ENCODE measurements at regions of chr15 and their contacts with region 1.

Region 1: GRCh38 chr15:78065284-78065872 is 12.1 kb downstream of the TBC1D2B start:
- DNase-seq: no peak
- ATAC-seq: peak; percentile 14
- H3K4me3 ChIP-seq: peak overlapping the region; percentile 69
- H3K27ac ChIP-seq: peak overlapping the region; percentile 89
- H3K4me1 ChIP-seq: peaks cover 70% of the 10 kb centered on the region
- H3K27me3 ChIP-seq: no peaks in the 10 kb centered on the region
- CTCF ChIP-seq: no peak
- EP300 ChIP-seq: no peak
- POLR2A ChIP-seq: no peak
- RAD21 ChIP-seq: no peak

Region 2: DNA sequence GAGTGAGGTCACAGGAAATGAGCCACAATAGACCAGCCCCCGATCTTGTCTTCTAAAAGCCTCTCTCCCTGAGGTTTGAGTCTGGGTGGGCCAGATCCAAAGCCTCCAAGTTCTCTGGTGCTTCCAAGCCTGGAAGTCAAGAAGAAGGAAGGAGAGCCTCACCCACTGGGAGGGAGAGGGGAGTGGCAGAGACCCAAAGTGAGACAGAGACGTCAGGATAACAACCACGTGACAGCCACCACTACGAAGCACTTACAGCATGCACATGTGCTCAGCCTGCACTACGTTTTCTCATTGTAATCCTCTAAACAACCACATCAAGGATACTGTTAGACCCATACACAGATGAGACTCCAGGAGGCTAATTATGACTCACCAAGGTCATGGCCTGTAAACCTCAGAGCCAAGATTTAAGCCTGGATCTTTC is 235.3 kb before region 1 on chr15:
- CTCF ChIA-PET with region 1: no interaction called
- POLR2A ChIA-PET with region 1: no interaction called
- RAD21 ChIA-PET with region 1: no interaction called
- SMC1A ChIA-PET with region 1: no interaction called
- in situ Hi-C with region 1: no loop called
- intact Hi-C with region 1: no loop called
- DNase-seq: no peak
- ATAC-seq: no peak
- H3K4me3 ChIP-seq: no peak overlapping the region
- H3K27ac ChIP-seq: no peak overlapping the region
- H3K4me1 ChIP-seq: no peaks in the 10 kb centered on the region
- H3K27me3 ChIP-seq: no peaks in the 10 kb centered on the region; a peak in 2 of 4 replicates
- CTCF ChIP-seq: no peak
- EP300 ChIP-seq: no peak
- POLR2A ChIP-seq: no peak
- RAD21 ChIP-seq: no peak

Region 3: DNA sequence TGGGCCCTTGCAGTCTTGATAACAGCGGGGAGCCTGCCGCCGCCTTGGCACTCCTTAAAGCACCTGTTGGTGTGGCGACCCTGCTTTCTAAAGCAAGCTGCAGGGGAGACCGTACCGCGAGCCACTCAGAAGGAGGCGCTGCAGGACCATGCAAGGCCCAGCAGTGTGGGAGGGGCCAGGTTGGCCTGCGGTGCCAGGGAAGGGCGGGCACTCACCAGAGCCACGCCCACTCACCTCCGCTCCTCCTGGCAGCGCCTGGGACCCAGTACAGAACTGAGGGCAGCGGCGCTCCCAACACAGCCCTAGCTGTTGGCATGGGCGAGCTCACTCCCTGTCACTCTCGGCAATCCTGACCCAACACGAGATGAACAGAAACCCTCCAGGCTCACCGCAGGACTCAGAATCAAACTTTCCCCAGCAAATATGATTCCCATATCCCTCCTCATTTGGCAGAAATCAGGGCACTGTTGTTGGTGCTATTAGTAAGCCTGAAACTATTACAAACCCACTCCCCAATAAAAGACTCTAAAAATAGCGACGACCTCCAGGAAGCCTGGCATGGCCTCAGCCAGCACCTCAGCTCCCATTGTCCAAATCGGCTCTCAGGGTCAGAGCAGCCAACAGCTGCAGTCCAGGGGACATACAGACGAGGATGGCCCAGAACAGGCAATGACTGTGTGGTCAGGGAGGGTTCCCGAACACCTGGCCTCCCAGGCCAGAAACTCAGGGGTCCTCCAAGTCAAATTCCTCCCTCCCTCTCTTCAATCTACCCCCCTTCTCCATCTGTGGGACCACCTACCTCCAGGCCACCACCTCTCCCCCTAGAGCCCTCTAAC is 65.1 kb before region 1 on chr15:
- CTCF ChIA-PET with region 1: interaction called, 12 read pairs
- POLR2A ChIA-PET with region 1: interaction called, 4 read pairs
- RAD21 ChIA-PET with region 1: interaction called, 15 read pairs
- SMC1A ChIA-PET with region 1: interaction called, 10 read pairs
- in situ Hi-C with region 1: no loop called
- intact Hi-C with region 1: loop called (anchors 5 kb)
- DNase-seq: no peak
- ATAC-seq: peak; percentile 87
- H3K4me3 ChIP-seq: no peak overlapping the region
- H3K27ac ChIP-seq: no peak overlapping the region
- H3K4me1 ChIP-seq: peaks cover 16% of the 10 kb centered on the region
- H3K27me3 ChIP-seq: no peaks in the 10 kb centered on the region
- CTCF ChIP-seq: peak; percentile 62 to 82 (median 72)
- EP300 ChIP-seq: no peak
- POLR2A ChIP-seq: no peak
- RAD21 ChIP-seq: peak; percentile 82

Region 4: DNA sequence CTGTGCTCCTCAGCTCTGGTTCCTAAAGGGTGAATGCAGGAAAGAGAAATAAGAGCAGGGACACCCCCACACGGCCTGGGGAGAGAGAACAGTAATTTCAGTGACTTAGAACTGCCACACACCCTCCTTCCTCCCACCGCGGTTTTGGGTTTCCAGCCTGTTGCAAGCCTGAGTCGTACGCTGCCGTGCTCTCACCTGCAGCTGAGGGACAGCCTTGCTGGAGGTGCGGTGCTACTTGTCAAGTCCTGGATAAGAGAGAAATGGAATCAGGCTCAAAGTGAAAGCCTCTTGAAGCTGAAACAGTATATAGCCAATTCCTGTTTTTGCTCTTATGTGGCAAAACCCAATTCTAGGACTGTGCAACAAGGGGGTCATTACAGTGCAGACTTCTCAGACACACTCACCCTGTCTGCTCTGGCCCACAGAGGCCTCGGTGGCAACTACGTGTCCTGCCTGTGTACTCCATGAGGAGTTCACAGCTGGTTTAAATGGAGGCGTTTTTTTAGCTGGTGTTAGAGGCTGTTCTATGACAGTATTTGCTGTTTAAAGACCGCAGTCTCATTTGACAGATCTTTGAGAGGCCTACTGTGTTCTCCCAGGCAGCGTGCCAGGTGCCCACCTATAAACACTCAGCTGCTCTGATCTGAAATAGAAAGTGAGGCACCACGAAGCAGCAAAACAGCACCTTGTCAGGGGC is 30.7 kb before region 1 on chr15:
- CTCF ChIA-PET with region 1: interaction called, 75 read pairs
- POLR2A ChIA-PET with region 1: interaction called, 16 read pairs
- RAD21 ChIA-PET with region 1: interaction called, 21 read pairs
- SMC1A ChIA-PET with region 1: interaction called, 87 read pairs
- in situ Hi-C with region 1: no loop called
- intact Hi-C with region 1: loop called (anchors 2 kb)
- DNase-seq: peak; percentile 66
- ATAC-seq: peak; percentile 92
- H3K4me3 ChIP-seq: no peak overlapping the region; the same call in 1 of the 2 replicates
- H3K27ac ChIP-seq: peak overlapping the region; percentile 4
- H3K4me1 ChIP-seq: peaks cover 40% of the 10 kb centered on the region
- H3K27me3 ChIP-seq: no peaks in the 10 kb centered on the region
- CTCF ChIP-seq: peak in 1 of 3 experiments; percentile 14; a peak in 1 of 6 replicates
- EP300 ChIP-seq: 0 out of 4 replicates have a peak, but pooled peaks of 1 of the 2 experiments have one; percentile 26
- POLR2A ChIP-seq: no peak
- RAD21 ChIP-seq: peak; percentile 24; the same call in 1 of the 2 replicates

Region 5: GRCh38 chr15:78049691-78050440 is 15.5 kb before region 1 on chr15:
- CTCF ChIA-PET with region 1: interaction called, 158 read pairs
- POLR2A ChIA-PET with region 1: interaction called, 79 read pairs
- RAD21 ChIA-PET with region 1: interaction called, 170 read pairs
- SMC1A ChIA-PET with region 1: interaction called, 305 read pairs
- in situ Hi-C with region 1: no loop called
- intact Hi-C with region 1: loop called (anchors 2 kb)
- DNase-seq: peak; percentile 68
- ATAC-seq: peak; percentile 92
- H3K4me3 ChIP-seq: peak overlapping the region; percentile 45; the same call in 1 of the 2 replicates
- H3K27ac ChIP-seq: peak overlapping the region; percentile 53
- H3K4me1 ChIP-seq: peaks cover 71% of the 10 kb centered on the region
- H3K27me3 ChIP-seq: no peaks in the 10 kb centered on the region
- CTCF ChIP-seq: no peak
- EP300 ChIP-seq: peak; percentile 52 to 84
- POLR2A ChIP-seq: peak; percentile 63
- RAD21 ChIP-seq: no peak

Region 6: DNA sequence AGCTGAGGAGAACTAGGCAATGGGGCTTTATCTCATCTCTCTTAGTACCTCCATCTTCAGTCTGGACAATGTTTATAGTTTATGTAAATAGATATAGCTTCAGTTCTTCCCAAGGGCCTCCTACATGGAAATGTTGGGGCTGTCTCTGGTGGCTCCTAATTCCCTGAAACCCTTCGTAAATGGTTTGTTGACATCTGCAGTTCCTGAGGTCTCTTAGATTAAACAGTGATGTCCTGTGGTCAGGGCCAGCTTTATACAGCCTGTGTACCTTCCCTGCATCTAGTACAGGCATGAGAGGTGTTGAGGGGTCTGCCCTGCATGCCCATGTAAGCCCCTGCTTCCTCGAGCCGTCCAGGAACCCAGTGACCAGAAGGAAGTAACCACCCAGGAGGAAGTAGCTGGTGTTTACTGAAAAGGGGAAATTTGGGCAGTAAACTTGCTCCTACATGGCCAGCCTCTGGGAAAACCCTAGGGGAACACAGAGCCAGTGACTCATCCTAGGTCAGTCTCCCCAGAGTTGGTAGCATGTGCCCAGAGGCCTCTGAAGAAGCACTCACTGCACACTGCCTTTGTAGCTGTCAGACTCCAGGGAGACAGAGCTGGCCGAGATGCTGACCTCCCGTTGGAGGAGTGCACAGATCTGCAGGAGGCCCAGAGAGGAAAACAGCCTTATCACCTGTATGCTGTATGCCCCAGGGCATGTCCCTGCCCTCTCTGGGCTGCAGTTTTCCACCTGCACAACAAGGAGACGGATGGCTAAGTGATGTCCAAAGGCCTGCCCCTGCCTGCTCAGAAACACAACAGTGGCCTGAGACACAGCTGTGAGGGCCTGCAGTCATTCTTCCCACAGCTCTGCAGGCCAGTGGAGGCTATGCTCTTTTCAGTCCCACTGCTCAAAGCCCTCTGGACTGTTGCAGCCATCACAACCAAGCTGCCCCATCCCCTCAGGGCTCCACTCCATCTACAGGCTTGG is 17.0 kb after region 1 on chr15:
- CTCF ChIA-PET with region 1: interaction called, 16 read pairs
- POLR2A ChIA-PET with region 1: interaction called, 6 read pairs
- RAD21 ChIA-PET with region 1: interaction called, 4 read pairs
- SMC1A ChIA-PET with region 1: interaction called, 10 read pairs
- in situ Hi-C with region 1: no loop called
- intact Hi-C with region 1: no loop called
- DNase-seq: no peak
- ATAC-seq: peak; percentile 52
- H3K4me3 ChIP-seq: no peak overlapping the region
- H3K27ac ChIP-seq: no peak overlapping the region
- H3K4me1 ChIP-seq: peaks cover 6% of the 10 kb centered on the region
- H3K27me3 ChIP-seq: no peaks in the 10 kb centered on the region
- CTCF ChIP-seq: no peak
- EP300 ChIP-seq: no peak
- POLR2A ChIP-seq: no peak
- RAD21 ChIP-seq: no peak

Region 7: GRCh38 chr15:78142332-78142731 is 77.0 kb after region 1 on chr15:
- CTCF ChIA-PET with region 1: no interaction called
- POLR2A ChIA-PET with region 1: no interaction called
- RAD21 ChIA-PET with region 1: no interaction called
- SMC1A ChIA-PET with region 1: no interaction called
- in situ Hi-C with region 1: no loop called
- intact Hi-C with region 1: no loop called
- DNase-seq: no peak
- ATAC-seq: no peak
- H3K4me3 ChIP-seq: no peak overlapping the region
- H3K27ac ChIP-seq: no peak overlapping the region
- H3K4me1 ChIP-seq: no peaks in the 10 kb centered on the region
- H3K27me3 ChIP-seq: no peaks in the 10 kb centered on the region
- CTCF ChIP-seq: no peak
- EP300 ChIP-seq: no peak
- POLR2A ChIP-seq: no peak
- RAD21 ChIP-seq: no peak

Region 8: GRCh38 chr15:78170848-78171773 is 105.7 kb after region 1 on chr15:
- CTCF ChIA-PET with region 1: no interaction called
- POLR2A ChIA-PET with region 1: no interaction called
- RAD21 ChIA-PET with region 1: no interaction called
- SMC1A ChIA-PET with region 1: no interaction called
- in situ Hi-C with region 1: no loop called
- intact Hi-C with region 1: loop called (anchors 5 kb)
- DNase-seq: peak; percentile 85
- ATAC-seq: peak; percentile 81
- H3K4me3 ChIP-seq: no peak overlapping the region; the same call in 1 of the 2 replicates
- H3K27ac ChIP-seq: peak overlapping the region; percentile 88
- H3K4me1 ChIP-seq: peaks cover 79% of the 10 kb centered on the region
- H3K27me3 ChIP-seq: no peaks in the 10 kb centered on the region
- CTCF ChIP-seq: no peak
- EP300 ChIP-seq: peak; percentile 36 to 70; a peak in 2 of 4 replicates
- POLR2A ChIP-seq: no peak
- RAD21 ChIP-seq: no peak